Activated naive CD4-positive, alpha-beta T cell treated with anti-CD3 and anti-CD28 coated beads, Interleukin-2, amount 10 ng/mL, durations not matched to agents 7 days and 5 days (primary cell): ENCODE measurements at regions of chr5 and their contacts with region 1.

Region 1: DNA sequence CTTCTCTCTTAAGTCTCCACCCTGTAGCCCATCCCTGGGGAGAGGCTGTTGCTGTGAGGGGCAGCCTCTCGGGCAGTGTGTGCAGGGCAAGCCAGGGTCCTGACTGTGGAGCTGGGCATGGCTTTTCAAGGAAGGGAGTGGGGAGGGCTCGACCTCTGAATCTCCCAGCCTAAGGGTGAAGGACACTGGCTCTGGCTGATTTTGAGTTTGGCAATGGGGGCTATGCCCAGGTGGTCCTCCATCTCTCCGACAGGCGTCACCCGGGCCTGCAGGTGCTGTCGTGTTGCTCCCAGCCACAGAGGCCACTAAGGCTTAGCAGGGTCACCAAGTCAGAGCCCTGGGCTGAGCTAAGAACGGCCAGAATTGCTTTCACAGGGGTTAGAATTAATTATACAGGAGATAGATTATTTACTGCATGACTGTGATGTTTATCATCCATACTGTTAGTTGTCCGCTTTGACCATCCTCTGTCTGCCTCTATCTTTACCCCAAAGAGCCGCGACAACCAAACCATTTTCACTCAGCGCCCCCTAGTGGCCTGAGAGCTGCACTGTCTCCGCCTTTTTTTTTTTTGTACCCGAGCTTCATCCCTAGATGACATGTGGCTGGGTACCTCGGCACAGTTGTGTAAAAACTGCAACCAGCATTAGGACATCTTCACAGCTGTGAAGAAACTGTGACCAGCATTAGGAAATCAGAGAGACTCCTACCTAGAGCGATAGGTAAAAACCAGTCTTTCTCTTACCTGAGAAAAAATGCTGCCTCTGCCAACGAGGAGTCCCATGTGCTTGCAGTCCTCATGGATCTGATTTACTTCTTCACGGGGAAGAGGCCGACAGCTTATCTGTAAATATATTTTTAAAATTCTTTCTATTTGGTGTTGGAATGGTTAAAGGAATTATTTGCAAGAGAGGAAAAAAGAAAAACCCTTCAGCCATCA is 44.5 kb downstream of the AGXT2 start:
- DNase-seq: peak; percentile 66
- H3K4me3 Mint-ChIP-seq: no peak overlapping the region
- H3K27ac Mint-ChIP-seq: no peak overlapping the region
- H3K4me1 Mint-ChIP-seq: no peaks in the 10 kb centered on the region
- H3K27me3 Mint-ChIP-seq: peaks cover 46% of the 10 kb centered on the region

Region 2: DNA sequence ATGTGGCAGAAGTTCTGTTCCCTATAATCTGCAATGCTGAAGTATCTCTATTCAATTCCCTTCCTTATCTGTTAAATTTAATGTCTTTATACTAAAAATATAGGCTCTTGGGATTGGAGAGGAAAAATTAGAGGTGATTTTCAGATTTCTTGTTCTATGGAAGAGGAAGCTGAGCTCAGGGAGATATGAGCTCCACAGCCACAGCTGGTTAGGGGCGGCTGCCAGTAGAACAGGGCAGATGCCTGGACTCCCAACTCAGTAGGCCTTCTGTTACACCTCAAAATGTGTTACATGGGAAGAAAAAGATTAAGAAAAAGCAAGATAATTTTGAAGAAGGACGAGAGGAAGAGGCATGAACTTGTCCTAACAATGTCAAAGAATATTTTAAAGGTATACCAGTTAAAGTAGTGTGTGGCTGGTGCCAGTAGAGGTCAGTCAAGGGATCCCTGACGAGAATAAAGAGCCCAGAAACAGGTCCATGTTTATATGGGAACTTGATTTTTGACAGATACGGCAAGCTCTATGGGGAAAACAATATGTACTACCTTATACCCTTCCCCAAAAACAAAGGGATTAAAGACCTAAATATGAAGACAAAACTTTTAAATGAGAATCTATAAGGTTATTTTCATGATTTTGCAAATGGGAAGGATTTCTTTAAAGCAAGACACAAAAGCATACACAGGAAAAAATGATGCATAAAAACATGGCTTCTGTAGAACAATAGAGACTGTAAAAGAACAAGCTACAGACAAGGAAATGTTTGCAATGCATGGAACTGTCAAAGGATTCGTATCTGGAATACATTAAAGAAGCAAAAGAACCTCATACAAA is 45.2 kb before region 1 on chr5:
- CTCF ChIA-PET with region 1: interaction called, 27 read pairs
- DNase-seq: no peak
- H3K4me3 Mint-ChIP-seq: no peak overlapping the region
- H3K27ac Mint-ChIP-seq: no peak overlapping the region
- H3K4me1 Mint-ChIP-seq: peaks cover 26% of the 10 kb centered on the region
- H3K27me3 Mint-ChIP-seq: no peaks in the 10 kb centered on the region

Region 3: DNA sequence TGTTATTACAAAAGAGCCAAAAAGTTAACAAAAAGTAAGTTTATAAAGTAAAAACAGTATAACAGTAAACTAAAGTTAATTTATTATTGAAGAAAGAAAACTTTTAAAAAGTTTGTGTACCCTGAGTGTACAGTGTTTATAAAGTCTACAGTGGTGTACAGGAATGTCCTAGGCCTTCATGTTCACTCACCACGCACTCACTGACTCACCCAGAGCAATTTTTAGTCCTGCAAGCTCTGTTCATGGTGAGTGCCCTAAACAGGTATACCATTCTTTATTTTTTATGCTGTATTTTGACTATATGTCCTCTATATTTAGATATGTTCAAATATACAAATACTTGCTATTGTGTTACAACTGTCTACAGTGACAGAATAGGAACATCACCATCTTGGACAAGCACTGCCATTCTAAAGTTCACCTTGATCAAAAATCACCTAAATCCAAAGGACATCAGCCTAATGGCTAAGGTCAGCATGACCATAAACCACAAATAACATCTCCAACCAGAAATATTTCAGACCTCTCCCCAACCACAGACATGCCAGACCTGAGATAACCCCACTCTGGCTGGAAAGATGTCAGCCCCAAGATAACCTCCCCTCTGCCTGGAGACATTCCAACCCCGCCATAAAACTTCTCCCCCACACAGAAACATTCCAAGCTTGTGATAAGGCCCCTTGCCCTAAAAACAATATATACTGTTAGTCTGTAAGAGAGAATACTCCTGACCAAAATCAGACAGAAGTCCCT is 11.6 kb before region 1 on chr5:
- CTCF ChIA-PET with region 1: interaction called, 11 read pairs
- DNase-seq: no peak
- H3K4me3 Mint-ChIP-seq: no peak overlapping the region
- H3K27ac Mint-ChIP-seq: no peak overlapping the region
- H3K4me1 Mint-ChIP-seq: no peaks in the 10 kb centered on the region
- H3K27me3 Mint-ChIP-seq: peaks cover 16% of the 10 kb centered on the region